Right lobe of liver (tissue), 6 donors: ENCODE measurements at regions of chr21 and their contacts with region 1.

Region 1: DNA sequence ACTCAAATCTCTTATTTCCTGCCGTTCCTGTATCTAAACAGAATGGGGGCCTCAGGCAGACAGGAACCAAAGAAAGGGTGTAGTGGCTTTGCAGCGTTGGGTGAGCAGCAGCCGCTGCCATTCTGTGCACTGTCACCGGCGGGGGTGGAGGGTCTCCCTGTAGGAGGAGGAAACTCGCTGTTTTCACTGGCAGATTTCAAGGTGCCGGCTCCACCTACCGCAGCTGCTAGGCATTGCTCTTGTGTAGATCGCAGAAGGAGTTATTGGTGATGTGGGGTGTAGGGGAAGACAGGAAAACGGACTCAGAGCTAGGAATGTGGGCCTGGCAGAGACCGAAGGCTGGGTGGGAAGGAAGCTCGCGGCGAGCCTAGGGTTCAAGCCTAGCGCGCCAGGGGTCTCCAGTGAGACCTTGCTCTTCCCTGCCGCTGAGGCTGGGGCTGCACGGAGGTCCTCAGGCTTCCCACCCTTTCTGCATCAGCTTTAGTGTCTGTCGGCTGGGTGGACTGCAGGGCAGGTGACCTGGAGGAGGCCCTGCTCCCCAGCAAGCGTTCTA is 20.8 kb downstream of the ATP5PO start:
- DNase-seq: peak; percentile 74 to 77 (median 76)
- ATAC-seq: peak; percentile 92 to 97 (median 94)
- H3K4me3 ChIP-seq: peak overlapping the region in 2 of 3 donors; percentile 1 to 17
- H3K27ac ChIP-seq: no peak overlapping the region
- H3K4me1 ChIP-seq: peaks cover 0 to 8% (median 2%) of the 10 kb centered on the region in 4 donors
- H3K27me3 ChIP-seq: no peaks in the 10 kb centered on the region
- CTCF ChIP-seq: peak; percentile 57 to 67 (median 60)
- POLR2A ChIP-seq: no peak

Region 2: DNA sequence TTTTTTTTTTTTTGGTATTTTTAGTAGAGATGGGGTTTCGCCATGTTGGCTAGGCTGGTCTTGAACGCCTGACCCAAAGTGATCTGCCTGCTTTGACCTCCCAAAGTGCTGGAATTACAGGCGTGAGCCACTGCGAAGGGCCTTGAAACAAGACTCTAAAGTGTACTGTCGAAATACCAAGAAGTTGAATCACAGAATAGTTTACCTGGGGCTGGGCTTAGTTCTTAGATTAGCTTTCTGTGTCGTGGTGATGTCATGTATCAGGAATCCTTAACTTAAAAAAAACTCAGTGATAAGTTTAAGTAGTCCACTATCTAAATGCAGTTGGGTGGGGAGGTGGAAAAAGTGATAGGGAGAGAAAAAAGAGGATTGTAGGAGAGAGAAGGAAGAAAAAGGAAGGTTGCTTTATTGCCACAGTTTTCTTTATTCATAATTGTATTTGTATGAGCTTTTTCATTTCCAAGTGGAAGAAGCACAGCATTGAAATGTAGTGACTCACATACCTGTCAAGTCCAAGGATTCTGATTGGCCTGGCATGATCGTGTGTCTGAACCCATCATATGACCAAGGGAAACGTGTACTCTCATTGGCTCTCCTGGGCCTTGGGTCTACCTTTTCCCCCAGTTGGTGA is 239.1 kb before region 1 on chr21:
- intact Hi-C with region 1: loop called in 1 of 2 experiments (anchors 10 kb)
- DNase-seq: no peak
- ATAC-seq: peak in 1 of 4 donors; percentile 10
- H3K4me3 ChIP-seq: no peak overlapping the region
- H3K27ac ChIP-seq: no peak overlapping the region
- H3K4me1 ChIP-seq: peaks cover 0 to 30% (median 10%) of the 10 kb centered on the region in 4 donors
- H3K27me3 ChIP-seq: no peaks in the 10 kb centered on the region
- CTCF ChIP-seq: no peak
- POLR2A ChIP-seq: no peak

Region 3: GRCh38 chr21:33844104-33844889 is 50.5 kb before region 1 on chr21:
- intact Hi-C with region 1: loop called in 1 of 2 experiments (anchors 10 kb)
- DNase-seq: no peak
- ATAC-seq: no peak
- H3K4me3 ChIP-seq: no peak overlapping the region
- H3K27ac ChIP-seq: no peak overlapping the region
- H3K4me1 ChIP-seq: peaks cover 0 to 3% (median 0%) of the 10 kb centered on the region in 4 donors
- H3K27me3 ChIP-seq: no peaks in the 10 kb centered on the region
- CTCF ChIP-seq: no peak
- POLR2A ChIP-seq: no peak